Mucosa of descending colon (tissue), 3 donors: ENCODE measurements at regions of chr19 and their contacts with region 1.

Region 1: DNA sequence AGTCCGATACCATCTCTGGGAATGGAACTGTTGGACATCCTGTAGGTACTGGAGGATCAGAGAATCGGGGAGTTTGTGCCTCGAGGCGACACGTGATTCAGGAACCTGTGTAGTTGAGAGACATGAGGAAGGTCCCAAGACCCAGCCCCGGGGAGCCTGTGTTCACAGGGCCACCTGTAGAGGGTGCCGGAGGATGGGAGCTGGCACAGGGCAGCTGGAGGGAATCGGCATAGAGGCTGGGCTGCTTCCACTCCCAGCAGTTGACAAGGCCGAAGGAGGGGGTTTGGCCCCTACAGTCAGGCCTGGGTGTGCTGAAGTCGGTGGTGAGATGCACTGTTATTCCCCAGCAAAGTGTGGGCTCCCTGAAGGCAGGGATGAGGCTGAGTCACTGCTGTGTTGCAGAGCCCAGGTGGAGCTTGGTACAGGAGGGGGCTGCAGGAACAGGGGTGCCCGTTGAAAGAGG is 2.5 kb upstream of the ISYNA1 start:
- DNase-seq: peak in 1 of 3 donors; percentile 61
- ATAC-seq: peak; percentile 14
- H3K4me3 ChIP-seq: no peak overlapping the region
- H3K4me1 ChIP-seq: peaks cover 18% of the 10 kb centered on the region
- CTCF ChIP-seq: no peak

Region 2: GRCh38 chr19:18571564-18572300 is 131.3 kb after region 1 on chr19 and contains the start of gene UBA52:
- intact Hi-C with region 1: loop called in 1 of 2 experiments (anchors 10 kb)
- DNase-seq: peak; percentile 99 to 100 (median 99)
- ATAC-seq: peak; percentile 99
- H3K4me3 ChIP-seq: peak within 1 kb of the TSS; percentile 76
- H3K4me1 ChIP-seq: peaks cover 12% of the 10 kb centered on the region
- CTCF ChIP-seq: no peak
- total RNA-seq, gene UBA52: 771 to 910 (median 811) TPM